ENCODE measurements at regions of chr7 and their contacts with region 1.

Region 1: DNA sequence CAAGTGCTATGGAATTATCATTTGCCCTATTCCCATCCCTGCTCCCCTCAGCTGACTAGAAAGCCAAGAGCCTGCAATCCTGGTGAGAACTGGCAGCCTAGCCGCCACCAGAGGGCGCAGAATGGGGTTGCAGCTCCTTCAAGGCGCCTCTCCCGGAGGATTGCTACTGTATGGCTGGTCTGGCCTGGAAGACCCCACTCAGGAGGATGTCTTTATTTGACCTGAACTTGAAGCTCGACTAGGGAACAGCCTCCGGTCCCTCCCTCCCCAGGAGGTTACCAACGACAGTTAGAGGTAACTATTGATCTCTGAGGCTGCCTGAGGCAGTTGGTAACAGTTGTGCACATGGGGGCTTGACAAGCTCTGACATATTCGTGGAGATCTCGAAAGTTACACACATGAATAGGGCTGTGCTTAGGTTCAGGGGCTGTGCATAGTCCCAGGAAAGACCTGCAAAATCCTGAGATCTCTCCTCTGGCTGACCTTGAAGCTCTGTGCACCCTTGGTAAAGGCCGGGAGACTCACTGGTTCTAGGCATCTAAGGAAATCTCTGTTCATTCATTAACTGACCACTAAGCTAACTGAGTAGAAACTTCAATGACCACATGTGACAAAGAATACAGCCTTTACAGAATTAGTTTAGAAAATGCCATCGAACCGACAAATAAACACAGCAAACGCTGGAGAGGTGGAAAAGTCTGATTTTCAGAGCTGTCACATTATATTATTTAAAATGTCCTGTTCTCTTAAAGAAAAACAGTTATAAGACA is 65.7 kb downstream of the TSPAN12 start:
- DNase-seq: peak in 8 of 9 experiments; percentile 25 to 65 (median 56)
- ATAC-seq: no peak
- H3K4me3 ChIP-seq: no peak overlapping the region
- H3K4me3 Mint-ChIP-seq: no peak overlapping the region
- H3K27ac ChIP-seq: no peak overlapping the region
- H3K27ac Mint-ChIP-seq: no peak overlapping the region
- H3K4me1 ChIP-seq: no peaks in the 10 kb centered on the region
- H3K4me1 Mint-ChIP-seq: no peaks in the 10 kb centered on the region
- H3K27me3 ChIP-seq: no peaks in the 10 kb centered on the region
- H3K27me3 Mint-ChIP-seq: peaks cover 4% of the 10 kb centered on the region
- CTCF ChIP-seq: peak; percentile 81

Region 2: DNA sequence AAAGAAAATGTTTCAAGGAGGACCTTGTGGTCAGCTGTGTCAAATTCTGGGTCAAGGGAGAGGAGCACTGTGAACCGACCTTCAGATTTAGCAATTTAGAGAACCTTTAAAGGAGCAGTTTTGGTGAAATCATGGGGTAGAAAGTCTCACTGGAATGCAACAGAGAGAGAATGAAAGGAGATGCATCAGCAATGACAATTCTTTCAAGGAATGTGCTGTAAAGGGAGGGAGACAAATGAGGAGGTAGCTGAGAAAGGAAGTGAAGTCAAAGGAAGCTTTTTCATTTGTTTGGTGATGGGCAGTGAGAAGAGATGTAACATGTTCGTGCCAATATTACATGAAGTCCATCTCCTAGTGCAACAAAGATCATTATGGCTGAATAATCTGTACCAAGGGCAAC is 100.4 kb before region 1 on chr7:
- CTCF ChIA-PET with region 1: no interaction called
- POLR2A ChIA-PET with region 1: no interaction called
- intact Hi-C with region 1: no loop called
- DNase-seq: no peak
- ATAC-seq: no peak
- H3K4me3 ChIP-seq: no peak overlapping the region
- H3K4me3 Mint-ChIP-seq: no peak overlapping the region
- H3K27ac ChIP-seq: no peak overlapping the region
- H3K27ac Mint-ChIP-seq: no peak overlapping the region
- H3K4me1 ChIP-seq: no peaks in the 10 kb centered on the region
- H3K4me1 Mint-ChIP-seq: no peaks in the 10 kb centered on the region
- H3K27me3 ChIP-seq: no peaks in the 10 kb centered on the region
- H3K27me3 Mint-ChIP-seq: no peaks in the 10 kb centered on the region
- CTCF ChIP-seq: no peak

Region 3: GRCh38 chr7:120819863-120820262 is 27.6 kb after region 1 on chr7:
- CTCF ChIA-PET with region 1: no interaction called
- POLR2A ChIA-PET with region 1: no interaction called
- intact Hi-C with region 1: no loop called
- DNase-seq: no peak
- ATAC-seq: no peak
- H3K4me3 ChIP-seq: no peak overlapping the region
- H3K4me3 Mint-ChIP-seq: no peak overlapping the region
- H3K27ac ChIP-seq: no peak overlapping the region
- H3K27ac Mint-ChIP-seq: no peak overlapping the region
- H3K4me1 ChIP-seq: no peaks in the 10 kb centered on the region
- H3K4me1 Mint-ChIP-seq: no peaks in the 10 kb centered on the region
- H3K27me3 ChIP-seq: no peaks in the 10 kb centered on the region
- H3K27me3 Mint-ChIP-seq: peaks cover 31% of the 10 kb centered on the region
- CTCF ChIP-seq: no peak

Region 4: GRCh38 chr7:120941064-120941463 is 148.8 kb after region 1 on chr7:
- CTCF ChIA-PET with region 1: no interaction called
- POLR2A ChIA-PET with region 1: no interaction called
- intact Hi-C with region 1: loop called (anchors 1 to 5 kb)
- DNase-seq: peak in 1 of 9 experiments; percentile 20
- ATAC-seq: no peak
- H3K4me3 ChIP-seq: no peak overlapping the region
- H3K4me3 Mint-ChIP-seq: no peak overlapping the region
- H3K27ac ChIP-seq: no peak overlapping the region
- H3K27ac Mint-ChIP-seq: no peak overlapping the region
- H3K4me1 ChIP-seq: no peaks in the 10 kb centered on the region
- H3K4me1 Mint-ChIP-seq: no peaks in the 10 kb centered on the region
- H3K27me3 ChIP-seq: no peaks in the 10 kb centered on the region
- H3K27me3 Mint-ChIP-seq: no peaks in the 10 kb centered on the region
- CTCF ChIP-seq: peak; percentile 28

Region 5: DNA sequence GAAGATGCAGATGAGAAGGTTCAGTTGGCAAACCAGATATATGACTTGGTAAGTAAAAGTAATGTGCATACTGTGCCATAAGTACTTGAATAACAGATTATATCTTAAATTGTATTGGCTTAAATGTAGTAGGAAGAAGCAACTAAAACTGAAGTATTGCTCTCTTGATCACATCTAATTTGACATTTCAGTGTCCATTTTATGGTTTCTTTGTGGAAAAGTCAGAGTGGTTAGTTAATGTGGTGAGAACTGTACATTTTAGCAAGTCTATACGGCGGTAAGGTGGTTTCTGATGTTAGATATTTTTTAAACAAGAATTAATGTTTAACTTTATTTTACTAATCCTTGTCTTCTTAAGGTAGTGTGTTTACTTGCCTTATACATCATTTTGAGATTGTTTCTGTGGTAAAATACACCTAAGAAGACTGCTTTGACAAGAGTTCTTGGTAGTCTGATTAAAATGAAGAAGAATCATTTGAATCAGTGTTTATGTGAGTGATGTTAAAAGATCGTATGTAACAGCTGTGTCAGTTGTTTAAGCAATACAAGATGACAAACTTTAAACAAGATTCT is 163.4 kb after region 1 on chr7:
- CTCF ChIA-PET with region 1: no interaction called
- POLR2A ChIA-PET with region 1: no interaction called
- intact Hi-C with region 1: no loop called
- DNase-seq: no peak
- ATAC-seq: no peak
- H3K4me3 ChIP-seq: no peak overlapping the region
- H3K4me3 Mint-ChIP-seq: no peak overlapping the region
- H3K27ac ChIP-seq: no peak overlapping the region
- H3K27ac Mint-ChIP-seq: no peak overlapping the region
- H3K4me1 ChIP-seq: peaks cover 12% of the 10 kb centered on the region
- H3K4me1 Mint-ChIP-seq: peaks cover 38% of the 10 kb centered on the region
- H3K27me3 ChIP-seq: no peaks in the 10 kb centered on the region
- H3K27me3 Mint-ChIP-seq: no peaks in the 10 kb centered on the region
- CTCF ChIP-seq: no peak

Region 6: DNA sequence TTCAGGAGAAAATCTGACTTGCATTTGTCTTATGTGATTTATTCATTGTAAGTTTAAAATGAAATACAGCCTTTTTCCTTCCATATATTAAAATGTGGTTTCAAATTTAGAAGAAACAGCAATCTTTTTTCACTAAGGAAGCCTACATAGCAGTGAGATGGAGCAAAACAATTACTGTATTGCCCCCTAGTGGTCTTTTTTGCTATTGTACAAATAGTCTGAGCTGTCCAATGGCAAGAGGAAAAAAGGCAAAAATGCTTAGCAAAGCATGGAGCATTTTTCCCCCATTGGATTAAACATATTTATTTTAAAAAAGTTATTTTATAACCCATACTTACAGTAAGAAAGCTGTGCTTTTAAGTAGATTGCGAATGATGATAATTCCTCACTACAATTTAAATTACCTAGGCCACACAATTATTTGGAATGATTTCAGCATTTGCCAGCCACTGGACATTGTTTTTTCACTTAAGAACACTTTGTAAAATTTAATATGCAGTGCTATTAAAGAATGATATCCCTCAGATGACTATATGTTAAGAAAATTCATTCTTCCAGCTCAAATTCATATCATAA is 315.7 kb after region 1 on chr7:
- CTCF ChIA-PET with region 1: interaction called, 9 read pairs
- POLR2A ChIA-PET with region 1: no interaction called
- intact Hi-C with region 1: loop called (anchors 1 to 5 kb)
- DNase-seq: peak in 2 of 9 experiments; percentile 55 to 64
- ATAC-seq: peak; percentile 79
- H3K4me3 ChIP-seq: no peak overlapping the region
- H3K4me3 Mint-ChIP-seq: no peak overlapping the region
- H3K27ac ChIP-seq: no peak overlapping the region
- H3K27ac Mint-ChIP-seq: no peak overlapping the region
- H3K4me1 ChIP-seq: no peaks in the 10 kb centered on the region
- H3K4me1 Mint-ChIP-seq: no peaks in the 10 kb centered on the region
- H3K27me3 ChIP-seq: no peaks in the 10 kb centered on the region
- H3K27me3 Mint-ChIP-seq: peaks cover 9% of the 10 kb centered on the region
- CTCF ChIP-seq: peak; percentile 87